ENCODE measurements at regions of chr10 and their contacts with region 1.

Region 1: GRCh38 chr10:35635576-35635975 is 6.5 kb downstream of the FZD8 start:
- DNase-seq: peak; percentile 69
- H3K4me3 ChIP-seq: no peak overlapping the region
- H3K27ac ChIP-seq: no peak overlapping the region
- H3K4me1 ChIP-seq: peaks cover 3% of the 10 kb centered on the region
- H3K27me3 ChIP-seq: no peaks in the 10 kb centered on the region
- CTCF ChIP-seq: peak; percentile 86

Region 2: GRCh38 chr10:36188080-36188453 is 552.5 kb after region 1 on chr10:
- intact Hi-C with region 1: no loop called
- DNase-seq: no peak
- H3K4me3 ChIP-seq: no peak overlapping the region
- H3K27ac ChIP-seq: no peak overlapping the region
- H3K4me1 ChIP-seq: no peaks in the 10 kb centered on the region
- H3K27me3 ChIP-seq: no peaks in the 10 kb centered on the region
- CTCF ChIP-seq: no peak

Region 3: DNA sequence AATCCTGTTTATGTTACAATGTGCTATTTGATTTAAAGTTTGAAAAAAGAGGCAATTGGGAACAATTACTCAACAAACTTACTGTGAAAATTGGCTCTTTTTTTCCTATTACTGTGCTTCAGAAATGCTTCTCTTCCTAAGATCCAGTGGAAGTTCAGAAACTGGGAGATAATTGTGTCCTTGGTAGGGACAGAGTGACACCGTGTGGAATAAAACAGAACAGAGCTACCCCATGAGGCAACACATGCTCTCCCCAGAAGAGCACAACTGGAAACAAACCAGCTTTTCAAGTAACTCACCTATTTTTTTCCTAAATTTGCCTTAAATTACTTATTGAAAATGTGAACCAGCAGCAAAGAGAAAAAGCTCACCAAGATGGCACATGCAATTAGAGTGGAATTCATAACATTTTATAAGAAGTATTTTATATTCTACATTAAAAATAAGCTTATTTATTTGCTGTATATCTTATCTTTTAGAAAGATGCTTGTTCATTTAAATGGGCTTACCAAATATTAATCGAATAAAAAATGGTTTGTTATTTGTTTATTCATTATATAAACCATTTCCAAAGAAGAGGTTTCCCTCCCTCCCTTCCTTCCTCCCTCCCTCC is 1143.8 kb after region 1 on chr10:
- intact Hi-C with region 1: loop called (anchors 5 kb)
- DNase-seq: no peak
- H3K4me3 ChIP-seq: no peak overlapping the region
- H3K27ac ChIP-seq: no peak overlapping the region
- H3K4me1 ChIP-seq: no peaks in the 10 kb centered on the region
- H3K27me3 ChIP-seq: no peaks in the 10 kb centered on the region
- CTCF ChIP-seq: peak; percentile 34

Region 4: DNA sequence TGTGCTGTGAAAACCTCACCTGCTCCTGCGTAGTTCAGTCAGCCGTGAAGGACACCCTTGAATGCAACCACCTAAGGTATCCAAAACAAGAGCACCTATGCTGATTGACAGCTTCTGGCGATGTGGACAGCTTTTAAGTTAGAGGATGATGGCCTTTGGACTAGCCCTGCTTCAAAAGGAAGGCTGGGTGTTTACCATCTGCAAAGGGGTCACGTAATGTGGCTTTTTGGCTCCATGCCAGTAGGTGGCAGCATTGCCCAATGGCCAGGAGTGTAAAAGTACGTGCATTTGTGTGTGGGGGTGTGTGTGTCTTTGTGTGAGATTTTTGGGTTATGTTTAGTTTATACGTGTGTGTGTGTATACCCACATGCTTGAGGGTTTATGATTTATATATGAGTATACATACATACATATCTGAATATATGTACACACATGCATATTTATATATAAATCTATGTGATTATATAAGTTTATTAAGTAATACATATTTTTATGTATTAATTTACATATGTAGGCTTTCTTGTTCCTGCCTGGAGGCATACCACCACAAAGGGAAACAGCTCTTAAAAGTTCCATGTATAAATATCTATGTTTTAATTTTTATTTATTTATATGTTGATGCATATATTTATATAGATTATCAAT is 1253.5 kb after region 1 on chr10:
- intact Hi-C with region 1: loop called (anchors 10 kb)
- DNase-seq: peak; percentile 35
- H3K4me3 ChIP-seq: no peak overlapping the region
- H3K27ac ChIP-seq: no peak overlapping the region
- H3K4me1 ChIP-seq: no peaks in the 10 kb centered on the region
- H3K27me3 ChIP-seq: no peaks in the 10 kb centered on the region
- CTCF ChIP-seq: no peak